ENCODE measurements at regions of chr20 and their contacts with region 1.

Region 1: DNA sequence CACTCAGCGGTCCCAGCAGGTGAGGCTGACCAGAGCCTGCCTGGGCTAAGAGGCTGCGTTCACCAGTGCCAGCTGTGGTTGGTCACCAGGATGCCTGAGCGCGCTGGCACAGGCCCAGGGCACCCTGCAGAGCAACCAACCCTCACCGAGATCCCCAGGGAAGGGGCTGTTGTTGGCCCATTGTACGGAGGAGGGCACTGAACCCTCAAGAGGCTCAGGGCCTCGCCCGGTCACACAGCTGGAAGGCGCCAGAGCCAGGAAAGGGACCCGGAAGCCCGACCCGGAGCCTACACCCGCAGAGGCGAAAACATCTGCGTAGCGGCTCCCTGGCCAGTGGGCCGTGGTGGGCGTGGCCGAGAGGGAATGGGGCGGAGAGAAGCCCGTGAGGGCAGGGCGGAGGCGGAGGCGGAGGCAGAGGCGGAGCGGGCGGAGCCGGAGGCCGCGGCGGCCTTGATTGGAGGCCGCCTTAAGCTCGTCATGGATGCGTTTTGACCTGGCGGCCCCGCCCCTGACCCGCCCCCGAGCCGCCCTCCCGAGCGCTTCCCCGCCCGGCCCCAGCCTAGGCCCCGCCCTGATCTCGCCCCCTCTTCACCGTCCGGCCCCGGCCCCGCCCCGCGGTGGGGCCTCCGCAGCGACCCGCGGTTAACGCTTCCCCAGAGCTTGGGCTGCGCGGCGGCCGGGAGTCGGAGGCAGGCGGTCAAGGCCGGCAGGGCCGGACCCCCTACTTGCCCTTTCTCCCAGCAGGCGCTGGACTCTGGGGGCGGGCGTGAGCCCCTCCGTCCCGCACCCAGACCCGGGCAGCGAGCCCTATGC is 2.2 kb upstream of the MRGBP start:
- DNase-seq: peak; percentile 90 to 94 (median 93)
- H3K4me3 ChIP-seq: peak overlapping the region; percentile 78 to 82
- H3K4me3 Mint-ChIP-seq: peak overlapping the region; percentile 76 to 90 (median 86)
- H3K27ac ChIP-seq: peak overlapping the region; percentile 83
- H3K27ac Mint-ChIP-seq: peak overlapping the region; percentile 94 to 98 (median 96)
- H3K4me1 ChIP-seq: peaks cover 32% of the 10 kb centered on the region
- H3K4me1 Mint-ChIP-seq: peaks cover 10 to 59% (median 28%) of the 10 kb centered on the region in 4 donors
- H3K27me3 ChIP-seq: no peaks in the 10 kb centered on the region
- H3K27me3 Mint-ChIP-seq: no peaks in the 10 kb centered on the region

Region 2: DNA sequence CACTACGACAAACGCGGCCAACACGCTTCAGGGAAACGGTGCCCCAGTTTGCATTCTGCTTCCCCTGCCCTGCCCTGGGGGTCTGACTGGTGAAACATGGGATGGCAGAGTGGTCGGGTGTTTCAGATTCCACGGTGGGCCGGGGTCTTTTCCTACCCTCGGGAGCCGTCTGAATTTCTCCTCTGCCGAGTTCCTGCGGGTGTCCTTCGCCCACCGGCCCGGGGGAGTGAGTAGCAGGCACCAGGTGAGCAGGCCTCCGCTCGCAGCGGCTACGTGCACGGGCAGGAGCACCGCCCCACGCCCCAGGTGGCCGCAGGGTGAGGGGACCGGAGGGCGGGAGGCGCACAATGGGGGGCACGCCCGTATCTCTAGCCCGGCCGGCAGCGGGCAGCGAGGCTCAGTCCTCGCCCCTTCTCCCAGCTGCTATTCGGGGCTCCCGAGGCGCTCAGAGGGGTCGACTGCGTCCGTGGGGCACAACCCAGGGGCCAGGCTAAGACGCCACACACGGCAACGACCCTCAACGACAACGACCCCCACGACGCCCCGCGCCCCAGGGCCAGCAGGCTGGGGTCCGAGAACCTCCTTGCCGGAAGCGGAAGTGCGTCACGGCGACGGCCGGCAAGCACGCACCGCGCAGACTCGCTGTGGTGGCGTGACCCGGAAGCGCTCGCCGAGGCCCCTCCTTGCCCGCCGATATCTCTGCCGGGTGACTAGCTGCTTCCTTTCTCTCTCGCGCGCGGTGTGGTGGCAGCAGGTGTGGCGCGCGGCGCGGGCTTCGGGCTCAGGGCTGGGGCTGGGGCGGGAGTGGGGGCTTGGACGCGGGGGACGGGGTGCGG is 407.5 kb before region 1 on chr20 and contains the start of gene RPS21:
- CTCF ChIA-PET with region 1: no interaction called
- POLR2A ChIA-PET with region 1: interaction called, 4 read pairs
- intact Hi-C with region 1: loop called (anchors 10 kb)
- DNase-seq: peak; percentile 92 to 94 (median 94)
- H3K4me3 ChIP-seq: peak within 1 kb of the TSS; percentile 88 to 90
- H3K4me3 Mint-ChIP-seq: peak within 1 kb of the TSS; percentile 90 to 95 (median 92)
- H3K27ac ChIP-seq: peak within 1 kb of the TSS; percentile 95
- H3K27ac Mint-ChIP-seq: peak within 1 kb of the TSS; percentile 91 to 98 (median 96)
- H3K4me1 ChIP-seq: peaks cover 36% of the 10 kb centered on the region
- H3K4me1 Mint-ChIP-seq: peaks cover 30 to 61% (median 47%) of the 10 kb centered on the region in 4 donors
- H3K27me3 ChIP-seq: no peaks in the 10 kb centered on the region
- H3K27me3 Mint-ChIP-seq: no peaks in the 10 kb centered on the region
- total RNA-seq, gene RPS21: 3,142 to 3,368 TPM

Region 3: DNA sequence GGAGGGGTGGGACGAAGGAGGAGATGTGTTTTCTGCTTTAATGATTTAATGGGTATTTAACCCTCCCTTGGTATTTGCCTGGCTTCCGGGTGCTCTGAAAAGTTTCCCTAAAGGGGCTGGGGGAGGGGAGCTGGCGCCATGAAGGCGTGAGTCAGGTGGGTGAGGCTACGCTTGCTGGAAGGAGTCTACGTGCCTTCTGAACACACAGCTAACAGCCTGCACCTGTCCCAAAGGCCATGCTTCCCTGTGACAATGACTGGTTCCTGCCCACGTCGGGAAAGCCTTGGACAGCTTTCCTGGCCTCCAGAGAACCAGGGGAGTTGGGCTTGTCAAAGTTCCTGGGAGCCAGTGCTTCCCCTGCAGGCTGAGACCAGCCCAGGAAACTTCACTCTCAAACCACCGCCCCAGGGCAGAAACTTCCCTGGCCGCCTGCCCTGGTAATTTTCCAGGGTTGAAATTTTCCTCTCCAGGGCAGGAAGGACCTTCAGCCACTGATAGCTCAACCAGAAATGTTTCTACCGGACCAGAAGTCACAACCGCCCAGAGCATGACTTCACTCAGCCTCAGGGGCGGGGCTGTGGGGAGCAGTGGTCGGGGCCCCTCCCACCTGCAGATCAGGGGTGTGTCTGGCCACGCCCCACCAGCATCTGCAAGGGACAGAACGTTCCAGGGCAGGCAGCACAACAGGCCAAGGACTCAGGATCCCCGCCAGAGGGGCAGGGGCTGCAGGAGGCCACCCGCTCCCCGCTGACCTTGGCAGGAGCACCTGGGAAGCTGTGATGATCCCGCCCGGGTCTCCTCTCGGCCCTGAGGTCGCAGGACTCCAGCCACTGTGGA is 170.4 kb before region 1 on chr20:
- CTCF ChIA-PET with region 1: no interaction called
- POLR2A ChIA-PET with region 1: interaction called, 4 read pairs
- intact Hi-C with region 1: loop called (anchors 1 kb)
- DNase-seq: peak; percentile 53 to 85 (median 56)
- H3K4me3 ChIP-seq: peak overlapping the region in 1 of 2 donors; percentile 21
- H3K4me3 Mint-ChIP-seq: peak overlapping the region; percentile 11 to 82 (median 63)
- H3K27ac ChIP-seq: no peak overlapping the region
- H3K27ac Mint-ChIP-seq: peak overlapping the region; percentile 43 to 83 (median 70)
- H3K4me1 ChIP-seq: peaks cover 24% of the 10 kb centered on the region
- H3K4me1 Mint-ChIP-seq: peaks cover 3 to 20% (median 9%) of the 10 kb centered on the region in 4 donors
- H3K27me3 ChIP-seq: no peaks in the 10 kb centered on the region
- H3K27me3 Mint-ChIP-seq: no peaks in the 10 kb centered on the region

Region 4: DNA sequence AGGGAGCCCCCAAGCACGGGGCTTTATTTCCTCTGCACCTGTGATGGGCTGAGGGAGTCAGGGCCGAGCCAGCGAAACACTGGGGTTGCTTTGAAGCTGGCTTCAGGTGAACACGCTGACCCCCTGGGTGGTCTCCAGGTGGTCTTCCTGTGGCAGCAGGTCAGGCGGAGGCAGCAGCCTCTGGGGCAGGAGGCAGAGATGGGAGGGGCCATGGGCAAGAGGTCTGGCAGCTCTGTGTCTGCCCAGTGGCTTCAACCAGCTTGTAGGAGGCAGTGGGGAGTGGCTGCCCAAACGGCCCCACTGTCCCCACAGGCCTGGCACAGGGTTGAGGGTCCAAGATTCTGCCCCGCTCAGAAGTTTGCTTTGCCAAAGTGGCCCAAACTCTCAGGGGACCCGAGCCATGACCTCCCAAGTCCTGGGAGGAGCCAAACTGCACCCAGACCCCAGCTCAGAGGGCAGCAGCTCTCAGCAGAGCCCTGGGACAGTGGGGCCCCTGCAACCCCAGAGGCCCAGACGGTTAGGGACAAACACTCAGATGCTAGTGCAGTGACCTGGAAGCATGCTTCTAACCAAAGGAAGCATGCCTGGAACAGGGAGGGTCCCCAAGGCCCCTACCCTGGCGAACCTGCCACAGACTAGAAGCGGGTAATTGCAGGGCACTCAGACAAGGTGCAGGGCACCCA is 70.2 kb before region 1 on chr20:
- CTCF ChIA-PET with region 1: no interaction called
- POLR2A ChIA-PET with region 1: no interaction called
- intact Hi-C with region 1: no loop called
- DNase-seq: no peak
- H3K4me3 ChIP-seq: no peak overlapping the region
- H3K4me3 Mint-ChIP-seq: no peak overlapping the region
- H3K27ac ChIP-seq: no peak overlapping the region
- H3K27ac Mint-ChIP-seq: no peak overlapping the region
- H3K4me1 ChIP-seq: peaks cover 12% of the 10 kb centered on the region
- H3K4me1 Mint-ChIP-seq: peaks cover 6 to 20% (median 13%) of the 10 kb centered on the region in 4 donors
- H3K27me3 ChIP-seq: no peaks in the 10 kb centered on the region
- H3K27me3 Mint-ChIP-seq: no peaks in the 10 kb centered on the region

Region 5: DNA sequence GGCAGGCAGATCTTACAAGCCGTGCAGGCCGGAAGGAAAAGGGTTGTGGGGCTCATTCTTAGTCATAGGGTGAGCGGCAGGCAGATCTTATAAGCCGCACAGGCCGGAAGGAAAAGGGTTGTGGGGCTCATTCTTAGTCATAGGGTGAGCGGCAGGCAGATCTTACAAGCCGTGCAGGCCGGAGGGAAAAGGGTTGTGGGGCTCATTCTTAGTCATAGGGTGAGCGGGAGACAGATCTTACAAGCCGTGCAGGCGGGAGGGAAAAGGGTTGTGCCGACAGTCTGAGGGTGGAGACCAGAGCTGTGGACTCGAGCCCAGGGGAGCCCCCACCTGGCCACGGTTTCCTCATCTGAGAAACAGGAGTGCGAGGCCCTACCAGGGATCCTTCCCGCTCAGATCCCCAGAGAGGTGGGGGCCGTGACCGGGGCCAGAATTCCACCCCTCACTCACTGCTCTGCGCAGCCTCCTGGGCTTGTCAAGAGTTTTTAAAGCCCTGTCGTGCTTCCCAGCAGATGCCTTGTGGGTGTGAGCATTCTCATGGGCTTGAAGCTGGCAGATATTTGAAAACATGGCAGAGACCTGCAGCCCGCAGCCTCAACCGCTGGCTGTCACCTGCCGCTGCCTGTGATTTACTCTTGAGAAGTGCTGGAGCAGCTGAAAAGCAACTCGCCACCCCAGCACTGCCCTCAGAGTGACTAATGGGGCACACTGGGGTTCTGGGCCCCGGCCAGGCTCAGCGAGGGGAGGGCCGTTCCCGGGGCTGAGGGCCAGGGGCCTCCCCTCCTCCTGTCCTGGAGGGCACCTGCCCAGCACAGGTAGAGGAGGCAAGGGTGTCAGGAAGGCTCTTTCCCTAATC is 53.6 kb before region 1 on chr20:
- CTCF ChIA-PET with region 1: interaction called, 7 read pairs
- POLR2A ChIA-PET with region 1: interaction called, 86 read pairs
- intact Hi-C with region 1: loop called (anchors 1 kb)
- DNase-seq: peak; percentile 80 to 96 (median 85)
- H3K4me3 ChIP-seq: peak overlapping the region in 1 of 2 donors; percentile 63
- H3K4me3 Mint-ChIP-seq: peak overlapping the region; percentile 80 to 91 (median 88)
- H3K27ac ChIP-seq: peak overlapping the region; percentile 69
- H3K27ac Mint-ChIP-seq: peak overlapping the region; percentile 82 to 98 (median 93)
- H3K4me1 ChIP-seq: peaks cover 56% of the 10 kb centered on the region
- H3K4me1 Mint-ChIP-seq: peaks cover 20 to 58% (median 40%) of the 10 kb centered on the region in 4 donors
- H3K27me3 ChIP-seq: no peaks in the 10 kb centered on the region
- H3K27me3 Mint-ChIP-seq: peaks cover 0 to 4% of the 10 kb centered on the region in 2 donors

Region 6: DNA sequence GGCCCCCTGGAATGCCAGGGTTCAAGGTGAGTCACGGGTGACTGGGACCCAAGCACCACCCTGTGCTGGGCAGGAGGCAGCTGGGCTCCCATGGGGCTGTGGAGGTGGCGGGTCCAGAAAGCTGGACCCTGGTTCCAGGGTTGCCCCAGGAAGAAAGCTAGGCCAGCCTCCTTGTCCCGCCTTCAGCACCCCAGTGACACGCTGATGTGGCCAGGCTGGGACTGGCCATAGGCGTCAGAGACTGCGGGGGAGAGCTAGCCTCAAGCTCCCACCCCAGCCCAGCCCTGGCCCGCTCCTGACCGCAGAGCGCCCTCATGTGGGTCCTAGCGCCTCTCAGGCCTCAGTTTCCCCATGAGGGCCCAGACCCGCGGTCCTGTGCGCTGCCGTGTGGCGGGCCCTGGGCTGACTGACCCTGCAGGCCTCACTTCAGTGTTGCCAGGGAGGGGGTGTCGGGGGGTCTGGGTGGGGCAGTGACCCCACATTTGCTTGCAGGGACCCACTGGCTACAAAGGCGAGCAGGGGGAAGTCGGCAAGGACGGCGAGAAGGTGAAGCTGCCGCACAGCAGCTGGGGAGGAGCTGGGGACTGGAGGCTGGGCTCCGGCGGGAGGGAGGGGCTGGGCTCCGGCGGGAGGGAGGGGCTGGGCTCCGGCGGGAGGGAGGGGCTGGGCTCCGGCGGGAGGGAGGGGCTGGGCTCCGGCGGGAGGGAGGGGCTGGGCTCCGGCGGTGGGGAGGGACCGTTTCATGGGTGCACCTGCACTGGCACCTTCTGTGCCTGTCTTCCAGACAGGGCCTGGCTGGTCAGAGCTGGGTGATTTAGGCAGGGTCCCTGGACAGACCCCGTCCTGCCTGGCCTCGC is 30.6 kb after region 1 on chr20:
- CTCF ChIA-PET with region 1: no interaction called
- POLR2A ChIA-PET with region 1: interaction called, 10 read pairs
- intact Hi-C with region 1: no loop called
- DNase-seq: peak in 4 of 5 donors; percentile 29 to 54 (median 44)
- H3K4me3 ChIP-seq: no peak overlapping the region
- H3K4me3 Mint-ChIP-seq: peak overlapping the region in 4 of 8 donors; percentile 31 to 60 (median 46)
- H3K27ac ChIP-seq: no peak overlapping the region
- H3K27ac Mint-ChIP-seq: peak overlapping the region in 2 of 7 donors; percentile 29 to 57
- H3K4me1 ChIP-seq: peaks cover 9% of the 10 kb centered on the region
- H3K4me1 Mint-ChIP-seq: peaks cover 0 to 8% (median 0%) of the 10 kb centered on the region in 4 donors
- H3K27me3 ChIP-seq: no peaks in the 10 kb centered on the region
- H3K27me3 Mint-ChIP-seq: no peaks in the 10 kb centered on the region

Region 7: DNA sequence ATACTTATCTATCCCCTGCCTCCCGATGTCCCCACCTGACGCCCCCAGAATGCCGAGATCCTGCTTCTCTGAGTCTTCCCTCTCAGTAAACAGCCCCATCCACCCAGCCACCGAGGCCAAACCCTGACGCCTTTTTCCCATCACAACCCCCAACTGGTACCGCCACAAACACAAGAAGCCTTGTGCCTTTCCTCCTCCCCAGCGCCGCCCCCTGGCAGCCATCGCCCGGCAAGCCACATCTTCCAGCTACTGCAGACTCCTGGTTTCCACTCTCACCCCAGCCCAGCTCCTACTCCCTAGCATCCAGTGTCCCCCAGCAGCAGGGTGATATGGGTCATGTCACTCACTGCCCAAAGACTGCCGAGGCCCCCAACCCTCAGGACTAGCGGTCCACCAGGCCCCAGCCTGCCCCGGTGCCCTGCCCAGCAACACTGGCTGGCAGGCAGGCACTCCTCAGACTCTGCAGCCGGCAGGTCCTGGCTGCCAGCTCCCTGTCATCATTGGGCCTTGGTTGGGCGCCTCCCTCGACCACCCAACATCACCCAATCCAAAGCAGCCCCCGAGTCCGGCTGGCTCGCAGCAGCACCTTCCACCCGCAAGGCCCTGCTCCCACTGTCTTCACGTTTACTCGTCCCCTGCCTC is 56.3 kb after region 1 on chr20:
- CTCF ChIA-PET with region 1: no interaction called
- POLR2A ChIA-PET with region 1: no interaction called
- intact Hi-C with region 1: no loop called
- DNase-seq: no peak
- H3K4me3 ChIP-seq: no peak overlapping the region
- H3K4me3 Mint-ChIP-seq: no peak overlapping the region
- H3K27ac ChIP-seq: no peak overlapping the region
- H3K27ac Mint-ChIP-seq: peak overlapping the region in 1 of 7 donors; percentile 40
- H3K4me1 ChIP-seq: no peaks in the 10 kb centered on the region
- H3K4me1 Mint-ChIP-seq: peaks cover 0 to 1% (median 0%) of the 10 kb centered on the region in 4 donors
- H3K27me3 ChIP-seq: no peaks in the 10 kb centered on the region
- H3K27me3 Mint-ChIP-seq: no peaks in the 10 kb centered on the region

Region 8: GRCh38 chr20:62970307-62971210 is 176.4 kb after region 1 on chr20:
- CTCF ChIA-PET with region 1: no interaction called
- POLR2A ChIA-PET with region 1: no interaction called
- intact Hi-C with region 1: no loop called
- DNase-seq: peak in 1 of 5 donors; percentile 31
- H3K4me3 ChIP-seq: no peak overlapping the region
- H3K4me3 Mint-ChIP-seq: no peak overlapping the region
- H3K27ac ChIP-seq: no peak overlapping the region
- H3K27ac Mint-ChIP-seq: no peak overlapping the region
- H3K4me1 ChIP-seq: peaks cover 6% of the 10 kb centered on the region
- H3K4me1 Mint-ChIP-seq: peaks cover 10 to 25% (median 12%) of the 10 kb centered on the region in 4 donors
- H3K27me3 ChIP-seq: peaks cover 6% of the 10 kb centered on the region
- H3K27me3 Mint-ChIP-seq: peaks cover 19 to 21% of the 10 kb centered on the region in 2 donors

Region 9: GRCh38 chr20:63009045-63009961 is 215.2 kb after region 1 on chr20:
- CTCF ChIA-PET with region 1: no interaction called
- POLR2A ChIA-PET with region 1: no interaction called
- intact Hi-C with region 1: loop called (anchors 5 kb)
- DNase-seq: peak; percentile 74 to 82 (median 74)
- H3K4me3 ChIP-seq: peak overlapping the region in 1 of 2 donors; percentile 65
- H3K4me3 Mint-ChIP-seq: peak overlapping the region in 6 of 8 donors; percentile 86 to 92 (median 90)
- H3K27ac ChIP-seq: no peak overlapping the region
- H3K27ac Mint-ChIP-seq: peak overlapping the region in 5 of 7 donors; percentile 36 to 95 (median 80)
- H3K4me1 ChIP-seq: peaks cover 44% of the 10 kb centered on the region
- H3K4me1 Mint-ChIP-seq: peaks cover 7 to 43% (median 26%) of the 10 kb centered on the region in 4 donors
- H3K27me3 ChIP-seq: peaks cover 31% of the 10 kb centered on the region
- H3K27me3 Mint-ChIP-seq: peaks cover 40% of the 10 kb centered on the region in 2 donors

Measured in CD4-positive, alpha-beta memory T cell (primary cell).